ENCODE measurements at regions of chr16 and their contacts with region 1.

Region 1: GRCh38 chr16:21167360-21167759 is 8.9 kb downstream of the LDAF1 start:
- DNase-seq: peak; percentile 87
- H3K4me3 Mint-ChIP-seq: peak overlapping the region; percentile 28
- H3K27ac Mint-ChIP-seq: peak overlapping the region; percentile 49
- H3K4me1 Mint-ChIP-seq: peaks cover 6% of the 10 kb centered on the region
- H3K27me3 Mint-ChIP-seq: no peaks in the 10 kb centered on the region
- CTCF ChIP-seq: no peak

Region 2: DNA sequence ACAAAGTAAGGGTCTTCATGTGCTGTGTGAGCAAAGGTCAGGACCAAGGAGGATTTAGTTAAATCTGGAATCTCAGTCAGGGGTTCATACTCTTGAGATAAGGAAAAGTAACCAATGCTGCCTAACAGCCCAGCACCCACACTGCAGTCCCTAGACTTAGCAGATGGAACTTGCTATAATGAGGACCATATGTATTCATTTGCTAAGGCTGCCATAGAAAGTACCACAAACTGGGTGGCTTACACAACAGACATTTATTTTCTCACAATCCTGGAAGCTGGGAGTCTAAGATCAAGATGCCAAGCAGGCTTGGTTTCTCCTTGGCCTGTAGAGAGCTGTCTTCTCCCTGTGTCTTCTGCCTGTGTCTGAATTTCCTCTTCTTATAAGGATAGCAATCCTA is 23.2 kb after region 1 on chr16:
- CTCF ChIA-PET with region 1: interaction called, 11 read pairs
- POLR2A ChIA-PET with region 1: interaction called, 4 read pairs
- intact Hi-C with region 1: no loop called
- DNase-seq: no peak
- H3K4me3 Mint-ChIP-seq: no peak overlapping the region
- H3K27ac Mint-ChIP-seq: no peak overlapping the region
- H3K4me1 Mint-ChIP-seq: no peaks in the 10 kb centered on the region
- H3K27me3 Mint-ChIP-seq: peaks cover 14% of the 10 kb centered on the region
- CTCF ChIP-seq: no peak